ENCODE measurements at regions of chr11 and their contacts with region 1.

Region 1: GRCh38 chr11:123261345-123262106 is 66.5 kb upstream of the CLMP start:
- DNase-seq: peak; percentile 25
- H3K4me3 ChIP-seq: no peak overlapping the region
- H3K27ac ChIP-seq: no peak overlapping the region
- H3K4me1 ChIP-seq: peaks cover 5% of the 10 kb centered on the region
- H3K27me3 ChIP-seq: peaks cover 14% of the 10 kb centered on the region
- CTCF ChIP-seq: peak; percentile 93 to 95 (median 95)

Region 2: DNA sequence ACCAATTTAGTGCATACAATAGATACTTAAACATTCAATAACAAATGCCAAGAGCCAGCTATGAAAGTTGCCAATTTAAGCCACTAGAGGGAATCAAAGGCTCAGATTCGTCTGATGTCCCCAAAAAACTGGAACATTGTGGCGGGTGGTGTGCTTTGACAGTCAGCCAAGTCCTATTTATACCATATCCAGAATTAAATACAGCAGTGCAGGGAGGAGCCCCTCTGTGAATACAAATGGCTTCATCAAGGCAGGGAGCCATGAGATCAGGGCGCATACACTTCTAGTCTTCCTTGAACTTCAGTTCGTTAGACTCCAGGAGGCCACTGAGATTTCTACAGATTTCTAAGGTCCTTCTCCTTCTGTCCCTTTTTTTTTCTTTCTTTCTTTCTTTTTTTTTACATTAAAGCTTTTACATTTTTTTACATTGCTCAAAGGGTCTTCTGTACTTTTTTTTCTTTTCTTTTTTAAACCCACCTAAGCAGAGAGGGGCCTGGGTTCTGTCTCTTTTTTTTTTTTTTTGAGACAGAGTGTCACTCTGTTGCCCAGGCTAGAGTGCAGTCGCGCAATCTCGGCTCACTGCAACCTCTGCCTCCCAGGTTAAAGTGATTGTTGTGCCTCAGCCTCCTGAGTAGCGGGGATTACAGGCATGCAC is 158.1 kb before region 1 on chr11:
- dilution Hi-C with region 1: loop called (anchors 25 kb)
- DNase-seq: no peak
- H3K4me3 ChIP-seq: no peak overlapping the region
- H3K27ac ChIP-seq: no peak overlapping the region
- H3K4me1 ChIP-seq: no peaks in the 10 kb centered on the region
- H3K27me3 ChIP-seq: no peaks in the 10 kb centered on the region
- CTCF ChIP-seq: peak; percentile 57 to 70 (median 62)